CD8-positive, alpha-beta memory T cell (primary cell): ENCODE measurements at regions of chr2 and their contacts with region 1.

Region 1: GRCh38 chr2:171191021-171191420 is 30.3 kb upstream of the TLK1 start:
- DNase-seq: no peak
- H3K4me3 ChIP-seq: no peak overlapping the region
- H3K4me3 Mint-ChIP-seq: no peak overlapping the region
- H3K27ac ChIP-seq: no peak overlapping the region
- H3K27ac Mint-ChIP-seq: no peak overlapping the region
- H3K4me1 ChIP-seq: no peaks in the 10 kb centered on the region
- H3K4me1 Mint-ChIP-seq: no peaks in the 10 kb centered on the region
- H3K27me3 ChIP-seq: no peaks in the 10 kb centered on the region
- H3K27me3 Mint-ChIP-seq: no peaks in the 10 kb centered on the region

Region 2: GRCh38 chr2:170271340-170271739 is 919.7 kb before region 1 on chr2:
- CTCF ChIA-PET with region 1: no interaction called
- POLR2A ChIA-PET with region 1: interaction called, 10 read pairs
- DNase-seq: no peak
- H3K4me3 ChIP-seq: no peak overlapping the region
- H3K4me3 Mint-ChIP-seq: no peak overlapping the region
- H3K27ac ChIP-seq: no peak overlapping the region
- H3K27ac Mint-ChIP-seq: no peak overlapping the region
- H3K4me1 ChIP-seq: no peaks in the 10 kb centered on the region
- H3K4me1 Mint-ChIP-seq: no peaks in the 10 kb centered on the region
- H3K27me3 ChIP-seq: no peaks in the 10 kb centered on the region
- H3K27me3 Mint-ChIP-seq: peaks cover 11 to 13% of the 10 kb centered on the region in 2 donors

Region 3: GRCh38 chr2:171102802-171103201 is 88.2 kb before region 1 on chr2:
- CTCF ChIA-PET with region 1: no interaction called
- POLR2A ChIA-PET with region 1: no interaction called
- DNase-seq: no peak
- H3K4me3 ChIP-seq: no peak overlapping the region
- H3K4me3 Mint-ChIP-seq: no peak overlapping the region
- H3K27ac ChIP-seq: no peak overlapping the region
- H3K27ac Mint-ChIP-seq: peak overlapping the region in 6 of 8 donors; percentile 1 to 61 (median 34)
- H3K4me1 ChIP-seq: no peaks in the 10 kb centered on the region
- H3K4me1 Mint-ChIP-seq: peaks cover 41 to 66% (median 63%) of the 10 kb centered on the region in 3 donors
- H3K27me3 ChIP-seq: no peaks in the 10 kb centered on the region
- H3K27me3 Mint-ChIP-seq: no peaks in the 10 kb centered on the region

Region 4: DNA sequence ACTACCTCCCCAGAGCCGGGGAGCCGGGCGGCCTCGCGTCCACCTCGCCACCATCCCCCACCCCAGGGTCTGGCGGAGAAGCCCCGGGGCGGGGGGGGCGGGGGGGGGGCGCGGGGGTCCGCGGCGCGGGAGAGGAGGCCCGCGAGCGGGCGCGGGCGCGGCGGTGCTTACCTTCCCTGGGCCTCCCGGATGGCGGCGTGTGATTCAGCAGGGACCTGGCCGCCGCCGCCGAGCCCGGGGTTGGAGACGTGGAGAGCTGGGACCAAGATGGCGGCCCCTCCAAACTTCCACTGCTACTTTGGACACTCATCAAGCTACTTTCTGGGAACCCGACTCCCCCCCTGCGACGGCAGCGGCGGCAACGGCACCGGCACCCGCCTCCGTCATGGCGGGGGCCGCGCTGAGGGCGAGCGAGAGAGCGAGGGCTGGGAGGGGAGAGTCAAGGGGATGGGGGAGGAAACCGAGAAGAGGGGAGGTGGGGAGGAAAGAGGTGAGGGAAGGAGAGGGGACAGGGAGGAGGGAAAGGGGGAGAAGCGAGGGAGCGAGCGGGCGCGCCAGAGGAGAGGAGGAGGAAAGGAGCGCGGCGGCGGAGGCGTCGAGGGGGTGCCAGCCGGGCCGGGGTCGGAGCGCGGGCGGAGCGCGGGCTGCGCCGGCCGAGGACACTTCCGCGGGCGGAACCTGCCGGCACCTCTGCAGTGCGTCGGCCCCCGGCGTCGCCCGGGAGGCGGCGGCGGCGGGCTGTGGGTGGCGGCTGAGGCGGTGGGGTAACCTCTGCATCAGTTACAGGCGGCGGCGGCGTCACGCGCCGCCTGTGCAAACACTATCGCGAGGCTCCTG is 30.7 kb before region 1 on chr2 and contains the start of gene TLK1:
- CTCF ChIA-PET with region 1: no interaction called
- POLR2A ChIA-PET with region 1: no interaction called
- DNase-seq: peak; percentile 64 to 85 (median 78)
- H3K4me3 ChIP-seq: peak within 1 kb of the TSS; percentile 80
- H3K4me3 Mint-ChIP-seq: peak within 1 kb of the TSS; percentile 93 to 99 (median 94)
- H3K27ac ChIP-seq: peak within 1 kb of the TSS; percentile 90
- H3K27ac Mint-ChIP-seq: peak within 1 kb of the TSS; percentile 89 to 99 (median 94)
- H3K4me1 ChIP-seq: peaks cover 55% of the 10 kb centered on the region
- H3K4me1 Mint-ChIP-seq: peaks cover 59 to 69% (median 67%) of the 10 kb centered on the region in 3 donors
- H3K27me3 ChIP-seq: no peaks in the 10 kb centered on the region
- H3K27me3 Mint-ChIP-seq: peaks cover 0 to 4% of the 10 kb centered on the region in 2 donors
- total RNA-seq, gene TLK1: 73.2 to 79.0 TPM